Gastrocnemius medialis (tissue), 4 donors: ENCODE measurements at regions of chr6 and their contacts with region 1.

Region 1: GRCh38 chr6:145836170-145836569 is 21.6 kb upstream of the FBXO30 start:
- DNase-seq: peak; percentile 45 to 57
- ATAC-seq: peak; percentile 99
- H3K4me3 ChIP-seq: no peak overlapping the region
- H3K27ac ChIP-seq: peak overlapping the region; percentile 39 to 67 (median 44)
- H3K4me1 ChIP-seq: peaks cover 8 to 13% of the 10 kb centered on the region in 2 donors
- H3K27me3 ChIP-seq: no peaks in the 10 kb centered on the region
- CTCF ChIP-seq: no peak
- POLR2A ChIP-seq: no peak

Region 2: GRCh38 chr6:145904868-145905267 is 68.7 kb after region 1 on chr6:
- in situ Hi-C with region 1: no loop called
- intact Hi-C with region 1: loop called (anchors 5 kb)
- DNase-seq: peak; percentile 69 to 74
- ATAC-seq: peak; percentile 97 to 99
- H3K4me3 ChIP-seq: no peak overlapping the region
- H3K27ac ChIP-seq: peak overlapping the region; percentile 80 to 89 (median 83)
- H3K4me1 ChIP-seq: peaks cover 47 to 54% of the 10 kb centered on the region in 2 donors
- H3K27me3 ChIP-seq: no peaks in the 10 kb centered on the region
- CTCF ChIP-seq: no peak
- POLR2A ChIP-seq: no peak